ENCODE measurements at regions of chr2 and their contacts with region 1.

Region 1: GRCh38 chr2:195049372-195050031 is 607.5 kb upstream of the SLC39A10 start:
- DNase-seq: no peak
- H3K4me3 ChIP-seq: no peak overlapping the region
- H3K27ac ChIP-seq: no peak overlapping the region
- H3K27me3 ChIP-seq: no peaks in the 10 kb centered on the region
- CTCF ChIP-seq: no peak

Region 2: DNA sequence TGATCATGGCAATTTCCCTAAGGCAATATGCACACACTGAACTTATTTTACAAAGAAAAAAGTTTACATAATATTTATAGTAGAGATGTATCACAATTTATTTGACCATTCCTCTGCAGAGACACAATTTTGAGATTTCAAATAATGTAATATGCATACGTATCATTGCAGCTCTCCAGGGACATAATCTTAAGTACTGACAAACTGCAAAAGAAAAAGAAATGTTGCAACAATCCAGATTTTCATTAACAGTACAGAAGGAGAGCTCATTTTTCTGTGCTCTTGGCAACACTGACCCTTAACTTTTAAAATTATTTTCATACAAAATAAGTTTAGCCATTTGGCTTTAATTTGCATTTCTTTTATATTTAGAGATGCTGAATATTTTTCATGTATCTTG is 102.7 kb before region 1 on chr2:
- CTCF ChIA-PET with region 1: no interaction called
- POLR2A ChIA-PET with region 1: no interaction called
- DNase-seq: no peak
- H3K4me3 ChIP-seq: no peak overlapping the region
- H3K27ac ChIP-seq: no peak overlapping the region
- H3K27me3 ChIP-seq: no peaks in the 10 kb centered on the region
- CTCF ChIP-seq: no peak

Region 3: GRCh38 chr2:195092341-195092740 is 42.8 kb after region 1 on chr2:
- CTCF ChIA-PET with region 1: interaction called, 11 read pairs
- POLR2A ChIA-PET with region 1: no interaction called
- DNase-seq: no peak
- H3K4me3 ChIP-seq: no peak overlapping the region
- H3K27ac ChIP-seq: no peak overlapping the region
- H3K27me3 ChIP-seq: no peaks in the 10 kb centered on the region
- CTCF ChIP-seq: no peak

Measured in AG04450 (cell line).